ENCODE measurements at regions of chr6 and their contacts with region 1.

Region 1: DNA sequence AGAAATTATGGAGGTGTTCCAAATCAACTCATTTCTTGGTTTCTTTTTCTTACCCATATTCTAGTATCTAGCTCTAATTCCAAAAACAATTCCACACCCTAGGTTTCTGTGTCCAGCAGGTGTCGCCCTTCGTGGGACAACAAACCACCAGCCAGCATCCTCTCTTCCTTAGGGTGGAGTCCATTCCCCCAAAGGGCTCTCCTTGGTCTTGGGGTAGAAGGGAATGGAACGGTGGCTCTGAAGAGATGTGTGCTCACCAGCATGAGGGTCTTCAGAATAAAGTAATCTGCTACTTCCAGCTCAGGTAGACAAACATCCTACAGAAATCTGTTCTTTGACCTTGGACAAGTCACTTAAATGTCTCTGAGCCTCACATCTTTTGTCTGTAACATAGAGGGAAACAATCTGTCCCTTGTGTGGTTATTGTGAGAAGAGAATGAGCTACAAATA is 7.2 kb downstream of the HLA-DMB start:
- DNase-seq: no peak
- H3K4me3 ChIP-seq: no peak overlapping the region
- H3K27ac ChIP-seq: no peak overlapping the region
- H3K4me1 ChIP-seq: no peaks in the 10 kb centered on the region
- H3K27me3 ChIP-seq: peaks cover 0 to 3% (median 0%) of the 10 kb centered on the region in 4 donors
- CTCF ChIP-seq: peak; percentile 82 to 87 (median 86)
- EP300 ChIP-seq: no peak
- POLR2A ChIP-seq: no peak

Region 2: GRCh38 chr6:32885698-32886286 is 47.9 kb before region 1 on chr6:
- intact Hi-C with region 1: loop called (anchors 5 kb)
- DNase-seq: no peak
- H3K4me3 ChIP-seq: no peak overlapping the region
- H3K27ac ChIP-seq: no peak overlapping the region
- H3K4me1 ChIP-seq: peaks cover 0 to 23% (median 18%) of the 10 kb centered on the region in 4 donors
- H3K27me3 ChIP-seq: no peaks in the 10 kb centered on the region
- CTCF ChIP-seq: peak; percentile 63 to 70 (median 64)
- EP300 ChIP-seq: no peak
- POLR2A ChIP-seq: no peak

Region 3: DNA sequence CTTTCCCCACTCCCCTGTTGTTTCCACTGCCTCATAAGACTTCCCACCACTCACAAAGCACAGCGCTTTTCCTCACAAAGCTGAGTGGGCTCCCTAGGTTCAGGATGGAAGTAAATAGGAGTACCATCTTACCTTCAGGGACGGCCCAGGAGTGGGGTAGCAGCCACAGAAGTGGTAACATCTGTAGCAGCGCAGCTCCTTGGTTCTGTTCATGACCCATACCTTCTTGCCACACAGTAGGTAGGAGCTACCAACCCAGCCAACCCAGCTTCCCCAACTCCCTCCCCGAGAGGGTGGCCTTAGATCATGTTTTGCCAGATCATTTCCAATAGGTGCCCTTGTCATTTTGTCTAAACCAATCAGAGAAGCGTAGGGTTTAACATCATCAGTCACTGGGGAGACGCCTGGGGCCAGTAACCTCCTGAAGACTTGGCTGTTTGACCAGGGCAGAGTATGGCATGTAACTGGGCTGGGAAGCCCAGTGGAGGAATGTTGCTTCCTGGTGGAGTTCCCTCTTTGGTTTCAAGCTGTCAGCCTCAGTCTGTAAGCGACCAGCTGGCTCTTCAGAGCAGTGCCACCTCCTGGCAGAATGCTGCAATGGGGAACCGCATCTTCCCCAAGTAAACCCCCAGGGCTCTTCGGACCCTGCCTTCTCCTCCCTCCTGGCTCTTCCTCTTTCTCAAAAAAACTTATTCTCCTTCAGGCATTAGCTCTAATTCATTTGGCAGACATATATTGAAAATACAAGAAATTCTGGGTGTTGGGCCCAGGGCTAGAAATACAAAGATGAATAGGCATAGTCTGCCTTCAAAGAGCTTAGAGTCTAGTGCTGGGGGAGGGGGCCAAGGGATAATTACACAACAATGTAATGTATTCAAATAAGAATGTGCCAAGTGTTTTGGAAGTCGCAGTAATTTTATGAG is 19.4 kb after region 1 on chr6 and contains the start of gene HLA-DMA:
- intact Hi-C with region 1: loop called (anchors 2 kb)
- DNase-seq: peak; percentile 97
- H3K4me3 ChIP-seq: peak within 1 kb of the TSS; percentile 32 to 48 (median 40)
- H3K27ac ChIP-seq: peak within 1 kb of the TSS; percentile 72 to 81 (median 78)
- H3K4me1 ChIP-seq: peaks cover 10 to 18% (median 14%) of the 10 kb centered on the region in 4 donors
- H3K27me3 ChIP-seq: no peaks in the 10 kb centered on the region
- CTCF ChIP-seq: peak; percentile 83 to 90 (median 89)
- EP300 ChIP-seq: no peak
- POLR2A ChIP-seq: peak; percentile 39
- total RNA-seq, gene HLA-DMA: 17.2 to 26.0 (median 21.6) TPM

Region 4: DNA sequence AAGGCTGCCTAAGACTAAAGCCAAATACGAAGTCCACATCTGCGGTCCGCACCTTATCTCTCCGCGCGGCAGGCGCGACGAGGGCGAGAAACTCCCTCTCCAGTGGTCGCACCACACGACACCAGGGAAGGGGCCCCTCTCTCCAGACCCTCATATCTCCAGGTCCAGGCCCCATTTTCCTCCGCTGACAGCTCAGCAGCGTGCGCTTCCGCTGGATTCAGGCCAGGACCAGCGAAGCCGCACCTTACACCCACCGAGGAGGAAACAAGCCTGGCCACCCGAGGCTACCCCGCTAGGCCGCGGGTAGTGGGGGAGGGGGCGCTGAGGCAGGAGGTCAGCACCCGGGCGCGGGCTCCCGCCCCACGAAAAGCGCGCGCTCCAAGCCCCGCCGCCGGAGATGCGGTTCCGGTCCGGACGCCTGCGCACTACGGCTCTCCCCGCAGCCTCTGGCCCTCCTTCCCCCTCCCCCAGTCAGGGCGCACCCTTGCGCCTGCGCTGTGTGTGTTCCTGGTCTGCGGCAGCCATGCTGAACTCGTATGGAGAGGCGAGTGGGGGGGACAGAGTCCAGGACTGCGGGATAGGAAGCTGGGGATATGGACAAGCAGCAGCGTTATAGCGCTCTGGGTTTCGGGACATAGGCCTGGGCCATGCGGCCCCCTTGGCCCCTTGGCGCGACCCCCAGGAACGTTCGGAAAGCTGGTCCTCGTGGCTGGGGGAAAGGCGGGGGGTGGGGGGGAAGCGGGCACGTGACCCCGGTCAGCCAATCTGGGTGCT is 34.6 kb after region 1 on chr6 and contains the start of gene BRD2:
- intact Hi-C with region 1: loop called (anchors 5 kb)
- DNase-seq: peak; percentile 99
- H3K4me3 ChIP-seq: peak within 1 kb of the TSS; percentile 59 to 87 (median 76)
- H3K27ac ChIP-seq: peak within 1 kb of the TSS; percentile 97 to 100 (median 99)
- H3K4me1 ChIP-seq: peaks cover 14 to 31% (median 21%) of the 10 kb centered on the region in 4 donors
- H3K27me3 ChIP-seq: no peaks in the 10 kb centered on the region
- CTCF ChIP-seq: peak in 1 of 3 experiments; percentile 15
- EP300 ChIP-seq: no peak
- POLR2A ChIP-seq: peak; percentile 93
- total RNA-seq, gene BRD2: 107 to 148 (median 118) TPM

Region 5: DNA sequence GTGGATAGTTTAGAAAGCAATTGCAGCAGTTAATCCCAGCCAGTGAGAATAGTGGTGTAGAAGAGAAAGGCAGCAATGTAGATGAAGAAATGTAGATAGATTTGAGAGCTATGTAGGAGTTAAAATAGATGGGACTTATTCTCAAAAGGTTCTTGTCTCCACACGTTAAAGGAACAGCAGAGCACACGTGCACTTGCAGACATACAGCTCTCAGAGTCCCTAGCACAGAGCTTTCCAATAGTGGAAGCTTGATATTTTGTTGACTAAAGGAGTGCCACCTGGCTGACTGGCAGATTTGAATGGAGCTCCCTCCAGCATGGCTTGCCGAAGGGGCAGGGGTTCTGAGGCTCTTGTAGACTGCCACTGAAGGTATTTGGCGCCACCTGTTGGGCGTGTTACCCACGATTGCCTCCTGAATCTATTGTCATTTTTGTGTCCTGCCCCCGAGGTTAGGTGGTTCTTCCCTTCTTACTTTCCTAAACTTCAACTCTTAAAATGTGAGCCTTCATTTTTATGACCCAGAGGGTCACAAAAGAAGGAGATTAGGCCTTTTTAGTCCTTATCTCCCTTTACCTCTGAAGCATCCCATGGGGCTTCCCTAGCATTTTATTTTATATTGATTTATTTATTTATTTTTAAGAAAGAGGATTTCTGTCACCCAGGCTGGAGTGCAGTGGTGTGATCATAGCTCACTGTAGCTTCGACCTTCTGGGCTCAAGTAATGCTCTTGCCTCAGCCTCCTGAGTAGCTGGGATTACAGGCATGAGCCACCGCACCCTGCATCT is 51.1 kb after region 1 on chr6:
- intact Hi-C with region 1: loop called (anchors 1 kb)
- DNase-seq: peak; percentile 97
- H3K4me3 ChIP-seq: no peak overlapping the region
- H3K27ac ChIP-seq: no peak overlapping the region
- H3K4me1 ChIP-seq: peaks cover 14 to 46% (median 27%) of the 10 kb centered on the region in 4 donors
- H3K27me3 ChIP-seq: no peaks in the 10 kb centered on the region
- CTCF ChIP-seq: peak; percentile 87 to 92 (median 90)
- EP300 ChIP-seq: no peak
- POLR2A ChIP-seq: no peak

Measured in esophagus muscularis mucosa (tissue), 4 donors.